Thyroid gland (tissue), 4 donors: ENCODE measurements at regions of chr10 and their contacts with region 1.

Region 1: DNA sequence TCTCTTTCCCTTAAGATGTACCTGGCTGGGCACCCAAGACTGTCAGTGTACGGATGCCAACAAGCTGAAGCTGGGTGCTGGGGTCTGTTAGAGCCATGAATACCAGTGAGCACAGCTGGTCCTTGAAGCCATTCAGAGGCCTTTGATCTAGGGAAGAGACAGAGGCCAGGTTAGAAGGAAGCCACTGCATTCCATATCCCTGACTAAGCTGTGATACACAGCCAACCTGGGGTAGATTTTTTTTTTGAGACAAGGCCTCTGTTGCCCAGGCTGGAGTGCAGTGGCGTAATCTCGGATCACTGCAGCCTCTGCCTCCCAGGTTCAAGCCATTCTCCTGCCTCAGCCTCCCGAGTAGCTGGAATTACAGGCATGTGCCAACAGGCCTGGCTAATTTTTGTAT is 20.8 kb downstream of the ZDHHC16 start:
- DNase-seq: no peak
- H3K4me3 ChIP-seq: no peak overlapping the region
- H3K27ac ChIP-seq: peak overlapping the region in 1 of 3 donors; percentile 38
- H3K4me1 ChIP-seq: no peaks in the 10 kb centered on the region
- H3K27me3 ChIP-seq: no peaks in the 10 kb centered on the region
- CTCF ChIP-seq: no peak
- POLR2A ChIP-seq: no peak

Region 2: GRCh38 chr10:97553575-97554031 is 86.8 kb after region 1 on chr10:
- intact Hi-C with region 1: loop called (anchors 5 kb)
- DNase-seq: peak; percentile 79 to 81
- H3K4me3 ChIP-seq: no peak overlapping the region
- H3K27ac ChIP-seq: no peak overlapping the region
- H3K4me1 ChIP-seq: peaks cover 0 to 21% of the 10 kb centered on the region in 2 donors
- H3K27me3 ChIP-seq: no peaks in the 10 kb centered on the region
- CTCF ChIP-seq: peak; percentile 38 to 90 (median 81)
- POLR2A ChIP-seq: no peak